CD14-positive monocyte (primary cell): ENCODE measurements at regions of chr17 and their contacts with region 1.

Region 1: GRCh38 chr17:30477083-30477773 is at the start of gene GOSR1:
- DNase-seq: peak; percentile 92 to 94 (median 93)
- H3K4me3 ChIP-seq: peak within 1 kb of the TSS; percentile 42 to 97 (median 85)
- H3K4me3 Mint-ChIP-seq: peak within 1 kb of the TSS; percentile 91 to 98
- H3K27ac ChIP-seq: peak within 1 kb of the TSS; percentile 89 to 96
- H3K27ac Mint-ChIP-seq: peak within 1 kb of the TSS; percentile 96 to 100 (median 99)
- H3K4me1 ChIP-seq: peaks cover 10 to 18% of the 10 kb centered on the region in 2 donors
- H3K4me1 Mint-ChIP-seq: peaks cover 17% of the 10 kb centered on the region
- H3K27me3 ChIP-seq: peaks cover 0 to 2% of the 10 kb centered on the region in 2 donors
- H3K27me3 Mint-ChIP-seq: peaks cover 0 to 5% (median 4%) of the 10 kb centered on the region in 3 donors
- CTCF ChIP-seq: peak; percentile 69
- polyA plus RNA-seq, gene GOSR1: 12.6 to 35.7 (median 20.9) TPM

Region 2: DNA sequence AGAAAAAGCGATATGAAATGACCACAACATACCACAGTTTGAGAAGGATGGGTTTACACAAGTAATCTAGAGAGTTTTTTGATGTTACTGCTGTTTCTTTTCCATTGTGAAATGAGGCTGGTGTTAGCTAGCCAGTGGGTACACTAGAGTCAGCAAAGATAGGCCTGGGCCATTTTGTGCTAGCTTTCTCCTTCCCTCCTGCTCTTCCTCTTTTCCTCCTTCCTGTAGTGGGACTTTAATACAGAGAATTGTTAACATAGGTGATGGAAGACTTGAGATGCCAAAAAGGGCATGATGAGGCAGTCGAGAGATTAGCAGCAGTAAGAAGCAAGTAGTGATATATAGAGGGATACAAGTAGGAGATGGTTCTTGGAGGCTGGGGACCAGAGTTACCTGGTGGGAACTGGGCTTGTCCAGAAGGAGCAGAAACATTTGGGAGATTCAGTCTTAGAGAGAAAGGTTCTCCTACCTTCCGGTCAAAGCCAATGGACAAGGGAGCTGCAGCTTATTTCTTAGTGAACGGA is 352.9 kb before region 1 on chr17:
- intact Hi-C with region 1: loop called in 1 of 2 experiments (anchors 10 kb)
- DNase-seq: no peak
- H3K4me3 ChIP-seq: no peak overlapping the region
- H3K4me3 Mint-ChIP-seq: no peak overlapping the region
- H3K27ac ChIP-seq: peak overlapping the region in 1 of 2 donors; percentile 44
- H3K27ac Mint-ChIP-seq: peak overlapping the region; percentile 6 to 92 (median 74)
- H3K4me1 ChIP-seq: peaks cover 4% of the 10 kb centered on the region in 2 donors
- H3K4me1 Mint-ChIP-seq: peaks cover 13% of the 10 kb centered on the region
- H3K27me3 ChIP-seq: no peaks in the 10 kb centered on the region
- H3K27me3 Mint-ChIP-seq: no peaks in the 10 kb centered on the region
- CTCF ChIP-seq: no peak

Region 3: GRCh38 chr17:30454635-30455034 is 22.6 kb before region 1 on chr17:
- intact Hi-C with region 1: no loop called
- DNase-seq: peak; percentile 11 to 65 (median 41)
- H3K4me3 ChIP-seq: no peak overlapping the region
- H3K4me3 Mint-ChIP-seq: no peak overlapping the region
- H3K27ac ChIP-seq: no peak overlapping the region
- H3K27ac Mint-ChIP-seq: peak overlapping the region in 2 of 7 donors; percentile 7 to 51
- H3K4me1 ChIP-seq: no peaks in the 10 kb centered on the region
- H3K4me1 Mint-ChIP-seq: no peaks in the 10 kb centered on the region
- H3K27me3 ChIP-seq: no peaks in the 10 kb centered on the region
- H3K27me3 Mint-ChIP-seq: peaks cover 0 to 2% (median 0%) of the 10 kb centered on the region in 3 donors
- CTCF ChIP-seq: no peak